Activated CD4-positive, alpha-beta memory T cell treated with anti-CD3 and anti-CD28 coated beads for 36 hours (primary cell): ENCODE measurements at regions of chr7 and their contacts with region 1.

Region 1: DNA sequence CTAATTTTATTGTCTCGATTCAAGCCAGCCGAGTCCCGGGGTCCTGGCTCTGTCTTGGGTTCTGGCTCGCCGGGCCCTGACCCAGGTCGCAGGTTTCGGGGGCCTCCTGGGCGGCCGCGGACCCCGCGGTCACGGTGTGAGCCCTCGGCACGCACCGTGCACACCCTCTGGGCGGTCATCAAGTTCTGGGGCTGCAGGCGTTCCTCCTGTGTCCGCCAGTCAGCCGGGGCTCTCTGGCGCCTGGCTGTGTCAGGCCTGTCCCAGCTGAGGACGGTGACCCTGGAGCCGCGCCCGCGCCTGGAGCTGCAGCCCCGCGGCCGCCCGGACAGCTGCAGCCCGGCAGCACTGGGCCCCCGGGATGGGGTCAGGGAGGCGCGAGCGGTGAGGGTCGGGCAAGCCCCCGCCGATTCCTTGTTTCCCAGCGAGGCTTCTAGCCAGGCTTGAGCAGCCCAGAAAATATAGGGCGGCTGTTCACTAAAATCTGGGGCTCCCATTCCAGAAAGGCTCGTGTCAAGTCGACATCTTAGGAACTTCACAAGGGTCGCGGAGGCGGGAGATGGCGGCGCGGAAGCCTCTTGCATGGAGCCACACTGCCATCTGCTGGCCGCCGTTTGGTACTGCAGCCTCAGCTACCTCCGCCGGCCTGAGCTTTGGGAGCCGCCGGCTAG is 4.2 kb upstream of the HOXA7 start:
- DNase-seq: peak; percentile 87
- H3K4me3 Mint-ChIP-seq: peak overlapping the region; percentile 61
- H3K27ac Mint-ChIP-seq: no peak overlapping the region
- H3K4me1 Mint-ChIP-seq: peaks cover 28% of the 10 kb centered on the region
- H3K27me3 Mint-ChIP-seq: peaks cover 81% of the 10 kb centered on the region

Region 2: DNA sequence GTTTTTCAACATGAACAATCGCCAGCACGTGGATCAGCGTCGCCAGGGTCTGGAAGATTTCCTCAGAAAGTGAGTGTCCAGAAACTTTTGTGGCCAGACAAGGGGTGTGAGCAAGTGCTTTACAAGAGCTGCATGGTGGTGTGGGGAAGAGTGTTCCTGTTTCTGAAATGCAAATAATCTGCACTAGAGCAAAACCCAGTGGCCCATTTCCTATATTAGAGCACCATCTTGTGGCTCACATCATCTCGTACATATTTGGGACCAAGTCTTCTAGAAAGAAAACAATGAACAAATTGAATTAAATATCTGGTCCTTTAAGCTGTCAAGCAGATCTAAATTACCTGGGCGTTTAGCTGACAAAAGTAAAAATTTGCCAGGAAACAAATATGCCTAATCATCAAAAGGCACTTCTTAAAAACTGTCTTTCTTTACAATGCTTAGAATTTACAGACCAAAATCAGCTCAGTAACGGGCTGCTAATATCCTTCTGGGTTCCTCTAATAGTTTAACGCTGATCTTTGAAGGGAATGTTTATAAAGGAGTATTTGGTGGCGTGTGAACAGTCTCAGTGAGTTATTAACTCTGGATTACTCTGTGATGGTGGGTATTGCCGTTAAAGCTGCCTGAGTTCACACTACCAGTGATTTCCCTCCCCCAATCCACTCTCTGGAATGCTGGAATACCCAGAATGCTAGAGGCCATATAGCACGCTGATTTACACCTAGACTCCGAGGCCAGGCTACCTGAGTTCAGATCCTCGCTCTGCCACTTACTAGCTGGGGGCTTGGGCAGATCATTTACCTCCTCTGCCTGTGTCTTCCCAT is 795.4 kb before region 1 on chr7:
- CTCF ChIA-PET with region 1: interaction called, 20 read pairs
- POLR2A ChIA-PET with region 1: no interaction called
- intact Hi-C with region 1: loop called (anchors 1 kb)
- DNase-seq: peak; percentile 51
- H3K4me3 Mint-ChIP-seq: no peak overlapping the region
- H3K27ac Mint-ChIP-seq: peak overlapping the region; percentile 31
- H3K4me1 Mint-ChIP-seq: peaks cover 12% of the 10 kb centered on the region
- H3K27me3 Mint-ChIP-seq: no peaks in the 10 kb centered on the region

Region 3: GRCh38 chr7:26667500-26668133 is 493.1 kb before region 1 on chr7:
- CTCF ChIA-PET with region 1: interaction called, 3 read pairs
- POLR2A ChIA-PET with region 1: no interaction called
- intact Hi-C with region 1: loop called (anchors 5 kb)
- DNase-seq: peak; percentile 61
- H3K4me3 Mint-ChIP-seq: no peak overlapping the region
- H3K27ac Mint-ChIP-seq: no peak overlapping the region
- H3K4me1 Mint-ChIP-seq: peaks cover 19% of the 10 kb centered on the region
- H3K27me3 Mint-ChIP-seq: no peaks in the 10 kb centered on the region

Region 4: DNA sequence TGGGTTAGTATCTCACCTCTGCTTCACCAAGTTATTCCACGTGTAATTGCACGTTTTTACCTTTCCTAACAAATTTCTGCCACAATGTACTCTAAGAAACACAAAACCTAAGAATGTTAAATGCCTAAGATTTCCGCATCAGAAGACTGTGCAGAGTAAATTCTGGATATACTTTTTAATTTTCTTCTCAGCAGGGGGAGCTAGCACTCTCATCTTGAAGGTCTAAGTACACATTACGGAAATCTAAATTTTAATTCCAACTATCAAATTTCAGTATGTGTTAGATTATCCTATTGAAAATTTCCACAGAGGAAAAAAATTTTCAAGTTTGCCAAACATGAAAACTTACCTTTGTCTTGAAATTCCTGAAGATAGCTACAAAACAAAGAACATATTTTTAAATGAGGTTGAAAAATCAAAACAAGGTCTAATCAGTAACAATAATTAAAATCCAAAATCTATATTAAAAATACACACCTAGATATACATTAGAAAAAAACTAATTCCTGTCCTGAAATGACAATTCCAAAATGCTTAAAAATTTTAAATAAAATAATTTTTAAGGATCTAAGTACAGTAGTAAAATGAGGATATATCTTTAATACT is 306.8 kb before region 1 on chr7:
- CTCF ChIA-PET with region 1: interaction called, 11 read pairs
- POLR2A ChIA-PET with region 1: no interaction called
- intact Hi-C with region 1: loop called (anchors 2 kb)
- DNase-seq: no peak
- H3K4me3 Mint-ChIP-seq: no peak overlapping the region
- H3K27ac Mint-ChIP-seq: no peak overlapping the region
- H3K4me1 Mint-ChIP-seq: no peaks in the 10 kb centered on the region
- H3K27me3 Mint-ChIP-seq: peaks cover 32% of the 10 kb centered on the region

Region 5: DNA sequence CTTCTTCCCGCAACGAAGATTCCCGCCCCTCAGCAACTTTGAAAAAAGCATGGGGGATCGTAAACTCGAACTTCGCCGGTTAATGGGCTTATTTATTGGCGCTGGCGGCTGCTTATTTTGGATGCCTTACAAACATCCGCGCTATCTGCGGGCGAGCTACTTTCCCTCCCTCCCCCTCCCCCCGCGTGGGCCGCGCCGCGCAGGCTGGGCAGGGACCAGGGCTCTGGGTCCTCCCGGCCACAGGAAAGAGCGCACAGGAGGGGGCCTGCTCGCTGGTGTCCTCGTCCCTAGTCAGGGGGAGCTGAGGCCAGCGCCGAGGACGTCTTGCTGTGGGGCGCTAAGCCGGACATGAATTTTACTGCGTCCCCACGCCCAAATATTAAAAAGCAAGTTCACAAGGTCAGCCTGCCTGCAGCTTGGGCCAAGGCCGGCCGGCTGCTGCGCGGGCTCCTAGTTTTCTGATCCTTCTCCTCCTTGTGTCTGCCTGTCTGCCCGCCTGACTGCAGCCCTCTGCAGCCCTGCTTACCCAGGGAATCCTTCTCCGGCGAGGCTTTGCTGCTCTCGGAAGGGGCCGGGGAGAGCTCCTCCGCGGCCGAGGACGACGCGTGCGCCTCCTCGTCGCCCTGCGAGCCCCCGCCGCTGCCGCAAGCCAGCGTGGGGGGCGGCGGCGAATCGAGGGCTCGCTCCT is 12.3 kb after region 1 on chr7:
- CTCF ChIA-PET with region 1: interaction called, 6 read pairs
- POLR2A ChIA-PET with region 1: no interaction called
- intact Hi-C with region 1: loop called (anchors 2 kb)
- DNase-seq: peak; percentile 23
- H3K4me3 Mint-ChIP-seq: no peak overlapping the region
- H3K27ac Mint-ChIP-seq: no peak overlapping the region
- H3K4me1 Mint-ChIP-seq: peaks cover 23% of the 10 kb centered on the region
- H3K27me3 Mint-ChIP-seq: peaks cover 72% of the 10 kb centered on the region

Region 6: DNA sequence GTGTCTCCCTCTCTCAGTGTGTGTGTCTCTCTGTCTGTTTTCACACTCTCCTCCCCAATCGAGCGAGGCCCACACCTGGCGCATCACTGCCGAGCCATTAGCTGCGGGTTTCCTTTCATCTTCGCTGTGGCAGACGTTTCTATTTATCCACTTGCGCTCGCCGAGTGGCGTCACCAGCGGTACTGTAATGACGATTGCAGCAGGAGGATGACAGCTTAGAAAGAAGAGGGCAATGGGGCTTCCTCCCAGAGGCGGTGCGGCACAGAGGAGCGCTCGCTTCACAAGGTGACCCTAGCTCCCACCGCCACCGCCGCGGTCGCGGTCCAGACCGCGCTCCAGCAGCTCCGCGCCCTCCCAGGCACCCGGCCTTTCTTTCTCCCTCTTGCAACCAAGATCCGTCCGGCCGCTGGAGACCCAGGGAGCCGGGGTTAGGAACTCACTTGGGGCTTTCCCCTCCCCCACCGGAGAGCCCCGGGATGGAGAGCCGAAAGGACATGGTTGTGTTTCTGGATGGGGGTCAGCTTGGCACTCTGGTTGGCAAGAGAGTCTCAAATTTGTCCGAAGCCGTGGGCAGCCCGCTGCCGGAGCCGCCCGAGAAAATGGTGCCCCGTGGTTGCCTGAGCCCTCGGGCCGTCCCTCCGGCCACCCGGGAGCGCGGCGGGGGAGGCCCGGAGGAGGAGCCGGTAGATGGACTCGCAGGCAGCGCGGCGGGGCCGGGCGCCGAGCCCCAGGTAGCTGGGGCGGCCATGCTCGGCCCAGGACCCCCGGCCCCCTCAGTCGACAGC is 82.1 kb after region 1 on chr7 and contains the start of gene EVX1:
- CTCF ChIA-PET with region 1: interaction called, 4 read pairs
- POLR2A ChIA-PET with region 1: no interaction called
- intact Hi-C with region 1: loop called (anchors 5 kb)
- DNase-seq: peak; percentile 69
- H3K4me3 Mint-ChIP-seq: peak within 1 kb of the TSS; percentile 45
- H3K27ac Mint-ChIP-seq: peak within 1 kb of the TSS; percentile 5
- H3K4me1 Mint-ChIP-seq: peaks cover 25% of the 10 kb centered on the region
- H3K27me3 Mint-ChIP-seq: peaks cover 79% of the 10 kb centered on the region
- total RNA-seq, gene EVX1: not detected